CD8-positive, alpha-beta T cell (primary cell): ENCODE measurements at regions of chr5 and their contacts with region 1.

Region 1: GRCh38 chr5:172188033-172188892 is at the start of gene STK10:
- DNase-seq: peak; percentile 79 to 95 (median 89)
- ATAC-seq: peak; percentile 75
- H3K4me3 ChIP-seq: peak within 1 kb of the TSS; percentile 74 to 95
- H3K4me3 Mint-ChIP-seq: peak within 1 kb of the TSS; percentile 100
- H3K27ac ChIP-seq: peak within 1 kb of the TSS; percentile 84 to 97
- H3K27ac Mint-ChIP-seq: peak within 1 kb of the TSS; percentile 99
- H3K4me1 ChIP-seq: peaks cover 14% of the 10 kb centered on the region
- H3K4me1 Mint-ChIP-seq: peaks cover 32% of the 10 kb centered on the region
- H3K27me3 ChIP-seq: no peaks in the 10 kb centered on the region
- H3K27me3 Mint-ChIP-seq: no peaks in the 10 kb centered on the region
- CTCF ChIP-seq: peak; percentile 97
- total RNA-seq, gene STK10: 172 to 182 TPM

Region 2: DNA sequence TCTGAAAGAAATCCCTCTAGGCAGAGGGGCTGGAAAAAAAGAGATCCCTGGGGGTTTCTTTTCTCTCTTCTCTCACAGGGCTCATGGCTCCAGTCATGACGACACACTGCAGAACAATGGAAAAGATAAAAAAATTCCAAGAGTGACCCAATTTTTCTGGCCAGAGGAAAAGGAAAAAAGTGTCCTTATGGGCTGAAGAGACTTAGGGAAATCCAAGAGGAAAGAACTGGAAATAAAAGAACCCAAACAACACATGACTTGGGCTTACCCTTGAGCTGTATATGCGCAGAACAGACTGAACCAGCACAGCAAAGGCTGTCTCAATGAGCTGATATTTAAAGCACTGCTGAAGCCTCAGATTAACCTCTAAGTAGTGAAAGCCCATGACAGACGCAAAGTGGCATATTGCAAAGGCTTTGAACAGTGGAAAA is 300.2 kb before region 1 on chr5:
- CTCF ChIA-PET with region 1: no interaction called
- POLR2A ChIA-PET with region 1: no interaction called
- intact Hi-C with region 1: no loop called
- DNase-seq: no peak
- ATAC-seq: no peak
- H3K4me3 ChIP-seq: no peak overlapping the region
- H3K4me3 Mint-ChIP-seq: no peak overlapping the region
- H3K27ac ChIP-seq: no peak overlapping the region
- H3K27ac Mint-ChIP-seq: no peak overlapping the region
- H3K4me1 ChIP-seq: no peaks in the 10 kb centered on the region
- H3K4me1 Mint-ChIP-seq: no peaks in the 10 kb centered on the region
- H3K27me3 ChIP-seq: no peaks in the 10 kb centered on the region
- H3K27me3 Mint-ChIP-seq: no peaks in the 10 kb centered on the region
- CTCF ChIP-seq: no peak

Region 3: GRCh38 chr5:171907725-171908343 is 280.4 kb before region 1 on chr5:
- CTCF ChIA-PET with region 1: interaction called, 8 read pairs
- POLR2A ChIA-PET with region 1: no interaction called
- intact Hi-C with region 1: loop called (anchors 1 to 5 kb)
- DNase-seq: peak; percentile 11 to 69 (median 41)
- ATAC-seq: peak; percentile 71
- H3K4me3 ChIP-seq: no peak overlapping the region
- H3K4me3 Mint-ChIP-seq: no peak overlapping the region
- H3K27ac ChIP-seq: no peak overlapping the region
- H3K27ac Mint-ChIP-seq: no peak overlapping the region
- H3K4me1 ChIP-seq: no peaks in the 10 kb centered on the region
- H3K4me1 Mint-ChIP-seq: peaks cover 41% of the 10 kb centered on the region
- H3K27me3 ChIP-seq: no peaks in the 10 kb centered on the region
- H3K27me3 Mint-ChIP-seq: no peaks in the 10 kb centered on the region
- CTCF ChIP-seq: peak; percentile 86

Region 4: DNA sequence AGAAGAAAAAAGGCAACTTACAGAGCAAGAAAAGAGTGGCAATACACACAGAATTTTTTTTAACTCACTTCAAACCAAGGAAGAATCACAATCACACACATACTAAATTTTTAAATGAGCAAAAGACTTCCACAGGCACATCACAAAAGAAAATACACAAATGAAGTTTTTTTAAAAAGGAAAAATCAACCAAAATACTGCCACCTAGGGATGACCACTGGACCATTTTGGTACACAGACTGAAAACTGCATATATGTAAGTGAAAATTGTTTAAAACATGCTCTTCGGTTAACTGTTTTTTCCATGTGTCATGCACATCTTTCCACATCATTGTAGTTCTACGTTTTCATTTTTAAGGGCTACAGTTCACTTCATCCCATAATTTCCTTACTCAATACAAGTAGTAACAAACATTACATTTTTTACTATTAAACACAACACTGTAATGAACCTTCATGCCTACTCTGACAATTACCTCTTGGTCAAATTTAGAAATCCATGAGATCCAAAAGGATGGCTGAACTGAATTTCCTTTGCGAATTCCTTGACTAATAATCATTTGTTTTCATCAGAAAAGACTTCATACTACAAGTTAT is 260.8 kb before region 1 on chr5:
- CTCF ChIA-PET with region 1: no interaction called
- POLR2A ChIA-PET with region 1: no interaction called
- intact Hi-C with region 1: no loop called
- DNase-seq: no peak
- ATAC-seq: no peak
- H3K4me3 ChIP-seq: no peak overlapping the region
- H3K4me3 Mint-ChIP-seq: no peak overlapping the region
- H3K27ac ChIP-seq: no peak overlapping the region
- H3K27ac Mint-ChIP-seq: no peak overlapping the region
- H3K4me1 ChIP-seq: peaks cover 9% of the 10 kb centered on the region
- H3K4me1 Mint-ChIP-seq: peaks cover 59% of the 10 kb centered on the region
- H3K27me3 ChIP-seq: no peaks in the 10 kb centered on the region
- H3K27me3 Mint-ChIP-seq: no peaks in the 10 kb centered on the region
- CTCF ChIP-seq: peak; percentile 15

Region 5: DNA sequence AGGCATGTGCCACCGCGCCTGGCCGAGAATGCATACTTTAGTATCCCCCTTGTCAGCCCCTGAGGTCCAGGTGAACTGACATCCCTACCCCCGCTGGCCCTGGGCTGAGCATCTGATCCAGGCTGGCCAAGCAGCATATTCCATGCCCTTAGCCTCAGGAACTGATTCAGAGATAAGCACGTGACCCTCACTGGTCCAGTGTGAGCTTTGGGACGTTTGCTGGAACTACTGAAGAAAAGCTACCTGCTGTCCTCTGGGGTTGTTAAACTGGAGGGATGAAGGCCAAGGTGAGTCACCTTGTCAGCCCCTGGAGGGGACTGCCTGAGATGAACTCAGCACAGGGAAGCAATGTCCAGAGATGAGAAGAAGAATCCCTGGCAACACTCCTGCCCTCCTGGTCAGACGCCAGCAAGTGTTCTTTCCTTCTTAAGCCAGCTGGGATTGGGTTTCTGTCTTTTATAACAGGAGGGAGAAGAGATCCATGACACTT is 122.7 kb before region 1 on chr5:
- CTCF ChIA-PET with region 1: interaction called, 11 read pairs
- POLR2A ChIA-PET with region 1: interaction called, 12 read pairs
- intact Hi-C with region 1: loop called (anchors 1 to 2 kb)
- DNase-seq: no peak
- ATAC-seq: no peak
- H3K4me3 ChIP-seq: peak overlapping the region in 1 of 2 experiments; percentile 6
- H3K4me3 Mint-ChIP-seq: peak overlapping the region; percentile 15
- H3K27ac ChIP-seq: peak overlapping the region; percentile 34 to 67
- H3K27ac Mint-ChIP-seq: peak overlapping the region; percentile 98
- H3K4me1 ChIP-seq: peaks cover 57% of the 10 kb centered on the region
- H3K4me1 Mint-ChIP-seq: peaks cover 72% of the 10 kb centered on the region
- H3K27me3 ChIP-seq: no peaks in the 10 kb centered on the region
- H3K27me3 Mint-ChIP-seq: no peaks in the 10 kb centered on the region
- CTCF ChIP-seq: no peak

Region 6: GRCh38 chr5:172114875-172115422 is 73.3 kb before region 1 on chr5:
- CTCF ChIA-PET with region 1: interaction called, 197 read pairs
- POLR2A ChIA-PET with region 1: interaction called, 82 read pairs
- intact Hi-C with region 1: loop called (anchors 1 kb)
- DNase-seq: peak; percentile 37 to 91 (median 67)
- ATAC-seq: peak; percentile 35
- H3K4me3 ChIP-seq: peak overlapping the region; percentile 13 to 30
- H3K4me3 Mint-ChIP-seq: peak overlapping the region; percentile 77
- H3K27ac ChIP-seq: peak overlapping the region; percentile 45 to 83
- H3K27ac Mint-ChIP-seq: peak overlapping the region; percentile 97
- H3K4me1 ChIP-seq: peaks cover 89% of the 10 kb centered on the region
- H3K4me1 Mint-ChIP-seq: peaks cover 83% of the 10 kb centered on the region
- H3K27me3 ChIP-seq: no peaks in the 10 kb centered on the region
- H3K27me3 Mint-ChIP-seq: no peaks in the 10 kb centered on the region
- CTCF ChIP-seq: no peak

Region 7: GRCh38 chr5:172162323-172162986 is 25.8 kb before region 1 on chr5:
- CTCF ChIA-PET with region 1: interaction called, 7 read pairs
- POLR2A ChIA-PET with region 1: interaction called, 3 read pairs
- intact Hi-C with region 1: loop called in 1 of 2 experiments (anchors 2 kb)
- DNase-seq: no peak
- ATAC-seq: no peak
- H3K4me3 ChIP-seq: no peak overlapping the region
- H3K4me3 Mint-ChIP-seq: no peak overlapping the region
- H3K27ac ChIP-seq: peak overlapping the region in 1 of 2 experiments; percentile 54
- H3K27ac Mint-ChIP-seq: peak overlapping the region; percentile 76
- H3K4me1 ChIP-seq: peaks cover 83% of the 10 kb centered on the region
- H3K4me1 Mint-ChIP-seq: peaks cover 76% of the 10 kb centered on the region
- H3K27me3 ChIP-seq: no peaks in the 10 kb centered on the region
- H3K27me3 Mint-ChIP-seq: no peaks in the 10 kb centered on the region
- CTCF ChIP-seq: no peak

Region 8: GRCh38 chr5:172764849-172765765 is 576.8 kb after region 1 on chr5:
- CTCF ChIA-PET with region 1: no interaction called
- POLR2A ChIA-PET with region 1: no interaction called
- intact Hi-C with region 1: loop called (anchors 5 kb)
- DNase-seq: peak; percentile 88 to 100 (median 96)
- ATAC-seq: peak; percentile 77
- H3K4me3 ChIP-seq: peak overlapping the region; percentile 41 to 48
- H3K4me3 Mint-ChIP-seq: peak overlapping the region; percentile 81
- H3K27ac ChIP-seq: peak overlapping the region; percentile 86 to 89
- H3K27ac Mint-ChIP-seq: peak overlapping the region; percentile 96
- H3K4me1 ChIP-seq: peaks cover 33% of the 10 kb centered on the region
- H3K4me1 Mint-ChIP-seq: peaks cover 52% of the 10 kb centered on the region
- H3K27me3 ChIP-seq: no peaks in the 10 kb centered on the region
- H3K27me3 Mint-ChIP-seq: no peaks in the 10 kb centered on the region
- CTCF ChIP-seq: no peak